ENCODE measurements at regions of chr5 and their contacts with region 1.

Region 1: DNA sequence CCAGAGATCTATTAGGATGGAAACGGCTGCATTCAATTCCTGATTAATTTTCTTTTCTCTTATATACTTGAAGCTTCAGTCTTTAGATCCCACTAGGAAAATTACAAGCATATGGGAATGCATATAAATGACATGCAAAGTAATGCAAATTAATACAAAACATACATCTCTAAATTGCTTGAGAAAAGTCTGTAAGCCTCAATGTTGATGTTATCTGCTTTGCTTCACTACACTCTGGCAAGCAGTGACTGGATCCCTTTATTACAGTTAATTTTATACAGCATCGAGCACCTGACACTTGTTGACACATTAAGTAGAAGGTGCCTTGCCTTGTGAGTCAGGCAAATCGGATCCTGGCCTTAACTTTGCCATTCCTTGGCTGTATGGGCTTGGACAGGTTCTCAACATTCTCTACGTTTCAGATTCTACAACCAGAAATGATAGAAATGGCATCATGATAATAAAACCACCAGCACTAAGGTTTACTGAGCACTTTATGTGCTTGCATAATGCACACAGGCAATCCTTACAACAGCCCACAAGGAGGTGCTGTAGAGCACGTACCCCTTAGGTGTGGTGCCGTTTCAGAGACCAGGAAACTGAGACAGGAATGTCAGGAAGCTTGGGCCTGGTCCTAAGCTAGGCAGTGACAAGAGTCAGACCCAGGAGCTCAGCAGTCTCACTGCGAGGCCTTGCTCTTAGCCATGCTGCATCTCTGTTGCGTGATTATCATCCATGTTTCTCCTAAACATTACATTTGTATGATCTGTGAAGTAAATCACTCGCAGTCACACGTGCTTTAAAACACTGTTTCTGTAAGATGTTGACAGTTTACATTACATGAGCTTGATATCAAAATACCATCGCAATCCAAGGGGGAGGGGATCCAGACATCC is 2.7 kb downstream of the GCNT4 start:
- DNase-seq: peak; percentile 75
- ATAC-seq: peak; percentile 46
- H3K4me3 Mint-ChIP-seq: no peak overlapping the region
- H3K27ac Mint-ChIP-seq: no peak overlapping the region
- H3K4me1 Mint-ChIP-seq: peaks cover 31% of the 10 kb centered on the region
- H3K27me3 Mint-ChIP-seq: peaks cover 39% of the 10 kb centered on the region
- CTCF ChIP-seq: peak; percentile 74

Region 2: DNA sequence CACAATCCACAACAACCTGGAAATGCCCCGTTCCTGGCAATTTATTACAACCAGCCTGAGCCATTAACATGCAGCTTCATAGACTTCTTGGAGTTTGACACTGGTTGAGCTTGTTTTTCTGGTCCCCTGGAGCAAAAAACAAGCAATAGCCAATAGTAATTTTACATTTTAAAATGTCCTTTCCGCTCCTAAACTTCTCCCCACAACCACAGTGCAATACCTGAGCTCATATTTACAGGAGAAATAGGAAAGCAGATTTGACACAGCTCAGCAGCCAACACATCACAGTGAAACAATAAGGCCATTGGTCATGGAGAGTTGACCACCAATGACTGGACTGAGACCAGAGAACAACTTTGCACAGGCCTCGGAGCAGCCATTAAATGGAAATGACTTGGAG is 482.2 kb before region 1 on chr5:
- CTCF ChIA-PET with region 1: no interaction called
- POLR2A ChIA-PET with region 1: no interaction called
- DNase-seq: no peak
- ATAC-seq: no peak
- H3K4me3 Mint-ChIP-seq: no peak overlapping the region
- H3K27ac Mint-ChIP-seq: no peak overlapping the region
- H3K4me1 Mint-ChIP-seq: peaks cover 11% of the 10 kb centered on the region
- H3K27me3 Mint-ChIP-seq: no peaks in the 10 kb centered on the region
- CTCF ChIP-seq: no peak

Region 3: DNA sequence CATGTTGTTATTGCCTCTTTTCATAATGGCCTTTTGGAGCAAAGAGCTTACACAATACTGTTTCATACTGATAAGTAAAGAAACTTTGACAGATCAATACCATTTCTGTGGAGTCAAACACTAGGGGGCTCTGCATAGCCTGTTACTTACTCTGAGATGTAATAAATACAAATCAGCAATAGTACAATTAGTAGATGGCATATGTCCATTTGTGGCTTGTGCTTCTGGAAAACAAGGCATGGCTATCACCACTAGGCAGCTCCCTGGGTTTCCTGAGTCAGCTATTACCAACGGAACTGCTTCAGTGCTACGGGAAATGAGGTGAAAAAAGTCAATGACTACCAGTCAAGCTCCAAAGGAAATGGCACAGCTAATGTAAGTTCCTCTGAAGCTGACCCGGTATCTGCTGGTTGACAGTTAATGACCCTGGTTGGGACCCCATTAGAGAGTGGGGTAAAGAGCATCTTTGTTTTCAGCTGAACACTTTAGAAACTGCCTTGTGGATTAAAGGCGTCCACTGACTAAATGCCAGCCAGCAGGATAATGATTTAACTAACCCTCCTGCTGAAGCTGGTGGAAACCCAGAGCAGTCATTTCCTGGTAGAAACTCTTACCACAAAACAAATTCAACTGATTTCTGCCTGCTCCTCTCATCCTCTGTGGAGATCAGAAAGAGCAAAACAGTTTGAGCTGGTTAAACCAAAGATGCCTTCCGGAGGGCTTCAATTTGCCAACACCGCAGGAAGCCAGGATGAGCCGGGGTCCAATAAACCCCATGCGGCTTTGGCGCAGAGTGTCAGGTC is 114.6 kb before region 1 on chr5:
- CTCF ChIA-PET with region 1: interaction called, 19 read pairs
- POLR2A ChIA-PET with region 1: no interaction called
- DNase-seq: no peak
- ATAC-seq: peak; percentile 78
- H3K4me3 Mint-ChIP-seq: no peak overlapping the region
- H3K27ac Mint-ChIP-seq: no peak overlapping the region
- H3K4me1 Mint-ChIP-seq: peaks cover 17% of the 10 kb centered on the region
- H3K27me3 Mint-ChIP-seq: no peaks in the 10 kb centered on the region
- CTCF ChIP-seq: no peak; the same call in 1 of the 2 replicates

Region 4: DNA sequence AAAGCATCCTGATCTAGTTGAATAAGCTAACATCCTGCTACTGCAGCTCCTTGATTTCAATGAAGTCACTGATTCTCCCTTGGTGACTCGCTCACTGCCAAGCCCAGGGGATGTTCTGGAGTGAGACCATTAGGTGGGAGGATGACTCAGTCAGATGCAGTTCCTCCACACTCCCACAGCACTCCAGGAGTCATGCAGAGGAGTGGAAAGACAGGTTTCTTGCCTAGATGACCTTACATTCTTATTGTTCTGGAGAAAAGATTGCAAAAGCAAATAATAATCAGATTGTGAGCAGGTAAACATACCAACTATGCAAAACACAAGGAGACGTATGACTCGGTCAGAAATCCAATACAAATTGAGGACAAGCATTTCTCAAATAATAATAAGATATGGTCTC is 12.6 kb before region 1 on chr5:
- CTCF ChIA-PET with region 1: interaction called, 18 read pairs
- POLR2A ChIA-PET with region 1: no interaction called
- DNase-seq: no peak
- ATAC-seq: peak; percentile 48; the same call in 1 of the 2 replicates
- H3K4me3 Mint-ChIP-seq: no peak overlapping the region
- H3K27ac Mint-ChIP-seq: peak overlapping the region; percentile 16; the same call in 1 of the 2 replicates
- H3K4me1 Mint-ChIP-seq: 0 out of 2 replicates have a peak, but pooled peaks cover 3% of the 10 kb centered on the region
- H3K27me3 Mint-ChIP-seq: no peaks in the 10 kb centered on the region
- CTCF ChIP-seq: no peak

Region 5: DNA sequence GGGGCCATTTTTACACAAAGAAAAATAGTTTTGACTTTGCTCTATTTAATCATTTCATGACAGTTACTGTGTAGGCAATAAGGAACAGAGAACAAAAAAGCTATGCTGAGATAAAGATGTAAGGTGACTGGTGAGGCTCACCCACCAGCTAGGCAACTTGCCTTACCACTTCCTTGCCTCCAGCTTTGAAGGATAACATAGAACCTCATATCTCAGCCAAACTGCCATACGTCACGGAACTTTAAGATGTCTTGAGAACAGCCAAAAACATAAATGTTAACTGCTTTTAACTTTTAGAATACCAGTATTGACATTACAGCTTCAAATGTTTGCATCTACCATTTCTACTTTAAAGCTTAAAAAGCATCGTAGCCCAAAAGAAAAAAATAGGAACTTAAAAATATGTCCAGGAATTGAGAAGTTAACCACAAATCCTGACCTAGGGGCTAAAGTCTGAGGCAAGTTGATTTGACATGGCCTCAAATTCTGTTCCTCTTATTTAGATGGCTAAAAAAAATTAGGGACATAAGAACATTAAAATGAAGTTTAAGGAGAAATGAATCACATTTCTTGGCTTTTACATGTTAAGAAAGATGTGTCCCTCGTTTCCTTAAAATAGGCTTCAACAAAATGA is 10.3 kb after region 1 on chr5:
- CTCF ChIA-PET with region 1: interaction called, 14 read pairs
- POLR2A ChIA-PET with region 1: no interaction called
- DNase-seq: no peak
- ATAC-seq: no peak
- H3K4me3 Mint-ChIP-seq: no peak overlapping the region
- H3K27ac Mint-ChIP-seq: no peak overlapping the region
- H3K4me1 Mint-ChIP-seq: peaks cover 22% of the 10 kb centered on the region
- H3K27me3 Mint-ChIP-seq: peaks cover 6% of the 10 kb centered on the region; the same call in 1 of the 2 replicates
- CTCF ChIP-seq: no peak

Region 6: DNA sequence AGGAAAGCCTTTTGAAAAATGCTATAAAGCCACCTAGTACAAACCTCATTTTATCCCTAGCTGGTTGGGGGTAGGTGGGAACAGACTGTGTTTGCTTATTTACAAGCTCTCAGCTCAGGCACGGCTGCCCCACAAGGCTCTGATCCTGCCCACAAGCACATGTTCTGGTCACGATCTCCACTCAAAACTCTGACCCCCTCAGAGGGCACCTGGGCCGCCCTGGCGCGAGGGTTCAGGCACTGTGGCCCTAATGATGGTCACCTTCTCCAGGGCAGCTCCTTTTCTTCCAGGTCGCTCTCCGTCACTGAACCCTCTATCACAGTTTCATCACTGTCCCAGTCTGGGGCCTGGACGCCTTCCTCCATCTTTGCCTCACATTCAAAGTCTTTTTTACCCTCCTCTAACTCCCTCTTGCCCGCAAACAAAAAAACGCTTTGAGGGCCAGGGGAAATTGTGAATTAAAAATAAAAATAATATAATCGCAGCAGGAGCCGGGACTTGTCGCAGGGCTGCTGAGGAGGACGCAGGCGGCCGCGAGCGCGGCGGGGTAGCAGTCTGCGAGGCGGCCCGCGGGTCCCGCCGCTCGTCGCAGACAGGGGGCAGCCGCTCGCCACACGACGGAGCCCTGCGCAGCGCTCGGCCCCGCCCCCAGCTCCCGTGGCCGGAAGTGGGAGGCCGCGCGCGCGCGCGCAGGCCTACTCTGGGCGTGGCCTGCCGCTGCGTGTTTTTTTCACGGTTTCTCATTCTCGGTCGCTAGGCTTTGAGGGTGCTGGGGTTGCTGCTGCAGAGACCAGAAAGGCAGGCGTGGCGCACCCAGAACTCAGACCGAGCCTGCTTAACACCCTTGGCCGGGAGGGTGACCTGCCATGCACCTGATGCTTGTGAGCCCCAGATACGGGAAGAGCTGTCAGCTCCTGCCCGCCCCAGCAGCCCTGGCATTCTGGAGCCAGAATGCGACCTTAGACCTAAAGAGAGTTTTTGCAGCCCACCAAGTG is 186.9 kb after region 1 on chr5 and contains the start of gene ANKRD31:
- CTCF ChIA-PET with region 1: interaction called, 49 read pairs
- POLR2A ChIA-PET with region 1: interaction called, 6 read pairs
- DNase-seq: peak; percentile 76
- ATAC-seq: peak; percentile 91
- H3K4me3 Mint-ChIP-seq: peak within 1 kb of the TSS; percentile 78
- H3K27ac Mint-ChIP-seq: peak within 1 kb of the TSS; percentile 91
- H3K4me1 Mint-ChIP-seq: peaks cover 36% of the 10 kb centered on the region
- H3K27me3 Mint-ChIP-seq: no peaks in the 10 kb centered on the region
- CTCF ChIP-seq: peak; percentile 73
- total RNA-seq, gene ANKRD31: 0.09 to 0.18 TPM (median 0.09 TPM) in 3 replicates

Region 7: GRCh38 chr5:75336625-75337339 is 287.1 kb after region 1 on chr5 and contains the start of gene HMGCR:
- CTCF ChIA-PET with region 1: interaction called, 26 read pairs
- POLR2A ChIA-PET with region 1: interaction called, 8 read pairs
- DNase-seq: peak; percentile 99
- ATAC-seq: peak; percentile 98
- H3K4me3 Mint-ChIP-seq: no peak within 1 kb of the TSS
- H3K27ac Mint-ChIP-seq: peak within 1 kb of the TSS; percentile 95
- H3K4me1 Mint-ChIP-seq: peaks cover 31% of the 10 kb centered on the region
- H3K27me3 Mint-ChIP-seq: no peaks in the 10 kb centered on the region
- CTCF ChIP-seq: no peak
- total RNA-seq, gene HMGCR: 137 to 153 TPM (median 145 TPM) in 3 replicates